PC-9 (cell line): ENCODE measurements at regions of chr5 and their contacts with region 1.

Region 1: DNA sequence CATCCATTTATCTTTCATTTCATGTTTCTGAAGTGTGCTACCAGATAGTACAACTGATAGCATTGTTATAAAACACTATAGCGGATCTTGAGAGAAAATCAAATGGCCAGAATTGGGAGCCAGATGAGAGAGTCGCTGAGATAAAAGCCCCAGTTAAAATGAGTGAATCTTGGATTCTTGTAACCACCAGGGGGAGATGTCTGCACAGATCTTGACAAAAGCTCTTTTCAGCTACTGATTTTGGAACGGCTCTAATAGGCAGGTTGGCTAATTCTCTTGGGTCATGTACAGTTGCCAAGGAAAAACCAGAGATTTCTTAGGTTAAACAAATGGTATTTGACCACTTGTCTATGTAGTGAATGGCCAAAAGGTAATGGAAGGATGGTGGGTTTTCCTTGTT is 21.7 kb downstream of the F2RL2 start:
- DNase-seq: peak in 1 of 2 experiments; percentile 23
- H3K4me3 ChIP-seq: no peak overlapping the region
- H3K27ac ChIP-seq: no peak overlapping the region
- H3K4me1 ChIP-seq: peaks cover 7% of the 10 kb centered on the region
- H3K27me3 ChIP-seq: no peaks in the 10 kb centered on the region
- CTCF ChIP-seq: peak; percentile 85

Region 2: GRCh38 chr5:76641514-76642120 is 40.1 kb after region 1 on chr5:
- CTCF ChIA-PET with region 1: interaction called, 5 read pairs
- POLR2A ChIA-PET with region 1: no interaction called
- intact Hi-C with region 1: loop called (anchors 1 kb)
- DNase-seq: peak; percentile 26 to 38
- H3K4me3 ChIP-seq: no peak overlapping the region
- H3K27ac ChIP-seq: no peak overlapping the region
- H3K4me1 ChIP-seq: no peaks in the 10 kb centered on the region
- H3K27me3 ChIP-seq: no peaks in the 10 kb centered on the region
- CTCF ChIP-seq: peak; percentile 82

Region 3: GRCh38 chr5:76683816-76684731 is 82.6 kb after region 1 on chr5:
- CTCF ChIA-PET with region 1: no interaction called
- POLR2A ChIA-PET with region 1: no interaction called
- intact Hi-C with region 1: no loop called
- DNase-seq: no peak
- H3K4me3 ChIP-seq: no peak overlapping the region
- H3K27ac ChIP-seq: no peak overlapping the region
- H3K4me1 ChIP-seq: peaks cover 8% of the 10 kb centered on the region
- H3K27me3 ChIP-seq: no peaks in the 10 kb centered on the region
- CTCF ChIP-seq: no peak

Region 4: GRCh38 chr5:77015938-77016569 is 414.6 kb after region 1 on chr5:
- CTCF ChIA-PET with region 1: no interaction called
- POLR2A ChIA-PET with region 1: no interaction called
- intact Hi-C with region 1: loop called (anchors 2 kb)
- DNase-seq: peak in 1 of 2 experiments; percentile 35
- H3K4me3 ChIP-seq: no peak overlapping the region
- H3K27ac ChIP-seq: no peak overlapping the region
- H3K4me1 ChIP-seq: no peaks in the 10 kb centered on the region
- H3K27me3 ChIP-seq: no peaks in the 10 kb centered on the region
- CTCF ChIP-seq: peak; percentile 61